Common myeloid progenitor, CD34-positive (primary cell): ENCODE measurements at regions of chr1 and their contacts with region 1.

Region 1: GRCh38 chr1:212455803-212456528 is 23.2 kb downstream of the NENF start:
- DNase-seq: peak; percentile 73 to 87 (median 79)
- H3K4me3 ChIP-seq: no peak overlapping the region
- H3K27ac ChIP-seq: no peak overlapping the region
- H3K4me1 ChIP-seq: peaks cover 0 to 26% (median 15%) of the 10 kb centered on the region in 4 experiments
- H3K27me3 ChIP-seq: no peaks in the 10 kb centered on the region

Region 2: GRCh38 chr1:212012034-212012740 is 443.8 kb before region 1 on chr1:
- CTCF ChIA-PET with region 1: interaction called, 11 read pairs
- POLR2A ChIA-PET with region 1: no interaction called
- DNase-seq: peak; percentile 65 to 76 (median 71)
- H3K4me3 ChIP-seq: no peak overlapping the region
- H3K27ac ChIP-seq: no peak overlapping the region
- H3K4me1 ChIP-seq: peaks cover 0 to 4% (median 1%) of the 10 kb centered on the region in 4 experiments
- H3K27me3 ChIP-seq: no peaks in the 10 kb centered on the region

Region 3: GRCh38 chr1:212070720-212071302 is 385.2 kb before region 1 on chr1:
- CTCF ChIA-PET with region 1: interaction called, 110 read pairs
- POLR2A ChIA-PET with region 1: no interaction called
- DNase-seq: peak; percentile 59 to 69 (median 66)
- H3K4me3 ChIP-seq: no peak overlapping the region
- H3K27ac ChIP-seq: no peak overlapping the region
- H3K4me1 ChIP-seq: peaks cover 0 to 7% (median 0%) of the 10 kb centered on the region in 4 experiments
- H3K27me3 ChIP-seq: no peaks in the 10 kb centered on the region

Region 4: GRCh38 chr1:212368073-212368484 is 87.9 kb before region 1 on chr1:
- CTCF ChIA-PET with region 1: interaction called, 78 read pairs
- POLR2A ChIA-PET with region 1: no interaction called
- DNase-seq: peak; percentile 75 to 89 (median 86)
- H3K4me3 ChIP-seq: no peak overlapping the region
- H3K27ac ChIP-seq: no peak overlapping the region
- H3K4me1 ChIP-seq: no peaks in the 10 kb centered on the region
- H3K27me3 ChIP-seq: no peaks in the 10 kb centered on the region

Region 5: DNA sequence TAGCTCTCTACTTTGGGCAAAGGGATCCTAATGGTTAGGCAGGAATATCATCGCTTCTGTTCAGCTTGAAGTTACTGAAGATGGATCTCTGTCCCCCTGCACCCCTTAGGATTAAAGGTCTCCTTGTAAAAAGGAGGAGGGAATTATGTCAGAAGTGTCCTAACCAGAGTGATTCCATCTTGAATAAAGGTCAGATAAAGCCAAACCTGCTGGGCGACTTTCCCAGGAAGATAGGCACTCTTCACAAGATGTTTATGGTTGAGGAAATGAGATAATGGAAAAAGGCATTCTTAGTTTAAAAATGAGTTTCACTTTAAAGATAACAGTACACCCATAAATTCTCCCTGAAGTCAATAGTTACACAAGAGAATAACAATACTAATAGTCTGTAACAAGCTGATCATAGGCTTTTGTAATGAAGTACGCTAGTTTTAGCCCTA is 25.0 kb before region 1 on chr1:
- CTCF ChIA-PET with region 1: interaction called, 19 read pairs
- POLR2A ChIA-PET with region 1: no interaction called
- DNase-seq: no peak
- H3K4me3 ChIP-seq: no peak overlapping the region
- H3K27ac ChIP-seq: no peak overlapping the region
- H3K4me1 ChIP-seq: peaks cover 3 to 26% (median 16%) of the 10 kb centered on the region in 4 experiments
- H3K27me3 ChIP-seq: no peaks in the 10 kb centered on the region

Region 6: GRCh38 chr1:212469701-212470458 is 13.9 kb after region 1 on chr1:
- CTCF ChIA-PET with region 1: interaction called, 70 read pairs
- POLR2A ChIA-PET with region 1: no interaction called
- DNase-seq: no peak
- H3K4me3 ChIP-seq: no peak overlapping the region
- H3K27ac ChIP-seq: no peak overlapping the region
- H3K4me1 ChIP-seq: no peaks in the 10 kb centered on the region
- H3K27me3 ChIP-seq: no peaks in the 10 kb centered on the region

Region 7: GRCh38 chr1:212782422-212783154 is 326.6 kb after region 1 on chr1:
- CTCF ChIA-PET with region 1: interaction called, 14 read pairs
- POLR2A ChIA-PET with region 1: no interaction called
- DNase-seq: peak; percentile 38 to 59 (median 52)
- H3K4me3 ChIP-seq: no peak overlapping the region
- H3K27ac ChIP-seq: no peak overlapping the region
- H3K4me1 ChIP-seq: no peaks in the 10 kb centered on the region
- H3K27me3 ChIP-seq: no peaks in the 10 kb centered on the region